ENCODE measurements at regions of chr2 and their contacts with region 1.

Region 1: DNA sequence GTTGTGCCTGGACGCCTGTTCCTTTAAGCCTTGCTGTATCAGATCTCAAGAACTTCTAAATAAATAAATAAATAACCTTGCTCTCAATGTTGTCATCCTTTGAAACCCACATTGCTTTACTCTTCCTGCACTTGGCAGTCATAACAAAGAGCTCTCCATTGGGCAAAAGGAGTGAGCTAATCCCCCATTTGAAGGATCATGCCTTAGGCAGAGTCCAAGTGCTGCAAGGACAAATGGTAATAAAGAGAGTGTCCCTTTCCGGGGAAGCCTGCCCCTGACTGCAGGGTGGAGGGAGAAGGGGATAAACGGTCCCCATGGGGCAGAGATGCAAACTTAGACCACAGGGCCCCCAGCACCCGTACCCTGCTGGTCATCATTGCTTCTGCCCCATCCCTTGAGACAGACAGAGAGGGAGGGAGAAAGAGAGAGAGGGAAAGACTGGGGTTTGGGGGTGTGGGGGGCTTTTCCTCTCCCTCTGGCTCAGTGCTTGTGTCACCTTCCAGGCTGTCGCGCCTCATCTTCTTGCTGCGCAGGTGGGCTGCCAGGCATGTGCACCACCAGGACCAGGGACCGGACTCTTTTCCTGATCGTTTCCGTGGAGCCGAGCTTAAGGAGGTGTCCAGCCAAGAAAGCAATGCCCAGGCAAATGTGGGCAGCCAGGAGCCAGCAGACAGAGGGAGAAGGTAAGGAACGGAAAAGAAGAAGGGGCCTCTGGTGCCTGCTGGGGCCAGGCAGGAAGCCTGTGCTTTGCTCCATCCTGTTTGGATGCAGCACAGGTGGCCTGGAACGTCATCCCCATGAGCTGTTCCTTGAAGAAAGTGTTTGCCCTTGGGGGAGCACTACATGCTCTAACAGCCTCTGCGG is 33.6 kb downstream of the CNGA3 start:
- DNase-seq: no peak
- ATAC-seq: no peak
- H3K4me3 ChIP-seq: no peak overlapping the region
- H3K27ac ChIP-seq: no peak overlapping the region
- H3K4me1 ChIP-seq: peaks cover 8% of the 10 kb centered on the region
- H3K27me3 ChIP-seq: peaks cover 0 to 4% of the 10 kb centered on the region in 2 donors
- CTCF ChIP-seq: no peak
- POLR2A ChIP-seq: no peak

Region 2: GRCh38 chr2:97806738-97807618 is 572.9 kb before region 1 on chr2:
- intact Hi-C with region 1: loop called (anchors 5 kb)
- DNase-seq: peak; percentile 79 to 89 (median 84)
- ATAC-seq: peak; percentile 85
- H3K4me3 ChIP-seq: no peak overlapping the region
- H3K27ac ChIP-seq: no peak overlapping the region
- H3K4me1 ChIP-seq: no peaks in the 10 kb centered on the region
- H3K27me3 ChIP-seq: no peaks in the 10 kb centered on the region
- CTCF ChIP-seq: peak; percentile 78 to 94 (median 88)
- POLR2A ChIP-seq: no peak

Region 3: DNA sequence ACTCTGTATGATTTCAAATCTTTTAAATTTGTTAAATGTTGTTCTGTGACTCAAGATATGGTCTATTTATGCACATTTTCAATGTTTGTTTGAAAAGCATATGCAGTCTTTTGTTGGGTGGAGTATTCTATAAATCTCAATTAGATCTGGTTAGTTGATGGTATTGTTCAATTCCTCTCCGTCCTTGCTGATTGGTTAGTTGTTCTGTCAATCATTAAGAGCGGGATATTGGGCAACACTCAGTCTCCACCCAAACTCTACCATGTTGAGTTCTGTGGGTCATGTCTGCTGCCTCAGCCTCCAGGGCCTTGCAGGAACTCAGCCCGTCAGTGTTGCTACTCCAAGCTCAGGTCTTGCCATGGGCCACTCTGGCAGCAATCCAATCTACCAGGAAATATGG is 174.0 kb before region 1 on chr2:
- intact Hi-C with region 1: no loop called
- DNase-seq: no peak
- ATAC-seq: no peak
- H3K4me3 ChIP-seq: no peak overlapping the region
- H3K27ac ChIP-seq: no peak overlapping the region
- H3K4me1 ChIP-seq: no peaks in the 10 kb centered on the region
- H3K27me3 ChIP-seq: no peaks in the 10 kb centered on the region
- CTCF ChIP-seq: no peak
- POLR2A ChIP-seq: no peak

Region 4: GRCh38 chr2:98548920-98549818 is 169.3 kb after region 1 on chr2:
- intact Hi-C with region 1: no loop called
- DNase-seq: no peak
- ATAC-seq: no peak
- H3K4me3 ChIP-seq: no peak overlapping the region
- H3K27ac ChIP-seq: no peak overlapping the region
- H3K4me1 ChIP-seq: no peaks in the 10 kb centered on the region
- H3K27me3 ChIP-seq: no peaks in the 10 kb centered on the region
- CTCF ChIP-seq: no peak
- POLR2A ChIP-seq: no peak

Measured in body of pancreas (tissue), 4 donors.